ENCODE measurements at regions of chr1 and their contacts with region 1.

Region 1: DNA sequence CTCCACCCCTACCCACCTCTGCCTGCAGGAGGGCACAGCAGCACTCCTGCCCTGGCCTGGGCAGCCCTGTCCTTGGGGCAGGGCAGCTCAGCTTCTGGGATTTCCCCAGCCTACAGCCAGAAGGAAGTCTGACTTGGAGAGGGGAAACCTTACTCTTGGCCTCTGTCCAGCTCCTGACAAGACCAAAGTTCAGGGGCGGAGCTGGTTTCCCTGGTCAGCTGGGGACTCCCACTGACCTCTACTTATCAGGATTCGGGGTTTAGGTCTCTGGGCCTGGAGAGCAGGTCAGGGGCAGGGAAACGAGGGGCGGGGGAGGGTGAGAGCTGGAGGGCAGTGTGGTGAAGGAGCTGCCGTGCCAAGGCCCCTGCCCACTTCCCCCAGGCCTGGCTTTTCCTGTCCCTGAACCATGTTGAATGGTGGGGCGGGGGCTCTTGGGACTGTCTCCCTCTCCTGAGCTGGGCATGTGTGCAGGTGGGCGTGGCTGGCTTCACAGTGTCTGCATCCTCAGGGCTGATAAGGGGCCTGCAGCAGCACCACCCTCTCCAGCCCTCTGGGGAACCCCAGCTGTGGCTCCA is 16.8 kb upstream of the ETV3 start:
- DNase-seq: peak; percentile 60 to 86 (median 75)
- ATAC-seq: peak; percentile 77
- H3K4me3 ChIP-seq: no peak overlapping the region
- H3K27ac ChIP-seq: peak overlapping the region in 2 of 4 donors; percentile 1 to 36
- H3K4me1 ChIP-seq: peaks cover 21% of the 10 kb centered on the region
- H3K27me3 ChIP-seq: no peaks in the 10 kb centered on the region
- CTCF ChIP-seq: no peak
- POLR2A ChIP-seq: no peak

Region 2: GRCh38 chr1:157090196-157090647 is 64.8 kb before region 1 on chr1:
- intact Hi-C with region 1: loop called (anchors 2 kb)
- DNase-seq: peak; percentile 85 to 91 (median 87)
- ATAC-seq: peak; percentile 81
- H3K4me3 ChIP-seq: no peak overlapping the region
- H3K27ac ChIP-seq: no peak overlapping the region
- H3K4me1 ChIP-seq: no peaks in the 10 kb centered on the region
- H3K27me3 ChIP-seq: no peaks in the 10 kb centered on the region
- CTCF ChIP-seq: peak; percentile 84 to 92 (median 89)
- POLR2A ChIP-seq: no peak

Region 3: GRCh38 chr1:157240495-157241184 is 85.6 kb after region 1 on chr1:
- intact Hi-C with region 1: no loop called
- DNase-seq: peak; percentile 83 to 94 (median 90)
- ATAC-seq: peak; percentile 97
- H3K4me3 ChIP-seq: no peak overlapping the region
- H3K27ac ChIP-seq: peak overlapping the region; percentile 84 to 94 (median 90)
- H3K4me1 ChIP-seq: peaks cover 33% of the 10 kb centered on the region
- H3K27me3 ChIP-seq: no peaks in the 10 kb centered on the region
- CTCF ChIP-seq: no peak
- POLR2A ChIP-seq: peak; percentile 10 to 84 (median 81)